Breast epithelium (tissue), 4 donors: ENCODE measurements at regions of chr9 and their contacts with region 1.

Region 1: GRCh38 chr9:79526149-79526672 is 45.6 kb upstream of the TLE4 start:
- DNase-seq: no peak
- H3K4me3 ChIP-seq: no peak overlapping the region
- H3K27ac ChIP-seq: no peak overlapping the region
- H3K4me1 ChIP-seq: no peaks in the 10 kb centered on the region
- H3K27me3 ChIP-seq: no peaks in the 10 kb centered on the region
- CTCF ChIP-seq: no peak
- POLR2A ChIP-seq: no peak

Region 2: GRCh38 chr9:78871452-78872331 is 654.5 kb before region 1 on chr9:
- intact Hi-C with region 1: loop called (anchors 5 kb)
- DNase-seq: no peak
- H3K4me3 ChIP-seq: no peak overlapping the region
- H3K27ac ChIP-seq: no peak overlapping the region
- H3K4me1 ChIP-seq: no peaks in the 10 kb centered on the region
- H3K27me3 ChIP-seq: no peaks in the 10 kb centered on the region
- CTCF ChIP-seq: no peak
- POLR2A ChIP-seq: no peak